ENCODE measurements at regions of chr6 and their contacts with region 1.

Region 1: GRCh38 chr6:24949020-24949569 is 13.3 kb upstream of the RIPOR2 start:
- DNase-seq: peak; percentile 91
- ATAC-seq: peak; percentile 90
- H3K4me3 ChIP-seq: peak overlapping the region in 3 of 5 experiments; percentile 15 to 58 (median 31)
- H3K4me3 Mint-ChIP-seq: peak overlapping the region; percentile 79
- H3K27ac ChIP-seq: peak overlapping the region; percentile 92 to 93
- H3K27ac Mint-ChIP-seq: peak overlapping the region; percentile 98
- H3K4me1 ChIP-seq: peaks cover 79 to 84% of the 10 kb centered on the region in 2 donors
- H3K4me1 Mint-ChIP-seq: peaks cover 73% of the 10 kb centered on the region
- H3K27me3 ChIP-seq: no peaks in the 10 kb centered on the region
- H3K27me3 Mint-ChIP-seq: no peaks in the 10 kb centered on the region
- CTCF ChIP-seq: no peak

Region 2: GRCh38 chr6:24960991-24961475 is 11.9 kb after region 1 on chr6:
- CTCF ChIA-PET with region 1: interaction called, 4 read pairs
- POLR2A ChIA-PET with region 1: interaction called, 4 read pairs
- intact Hi-C with region 1: loop called (anchors 2 kb)
- DNase-seq: no peak
- ATAC-seq: no peak
- H3K4me3 ChIP-seq: peak overlapping the region in 1 of 5 experiments; percentile 13
- H3K4me3 Mint-ChIP-seq: peak overlapping the region; percentile 68
- H3K27ac ChIP-seq: peak overlapping the region in 1 of 2 donors; percentile 45
- H3K27ac Mint-ChIP-seq: peak overlapping the region; percentile 88
- H3K4me1 ChIP-seq: peaks cover 63 to 69% of the 10 kb centered on the region in 2 donors
- H3K4me1 Mint-ChIP-seq: peaks cover 74% of the 10 kb centered on the region
- H3K27me3 ChIP-seq: no peaks in the 10 kb centered on the region
- H3K27me3 Mint-ChIP-seq: no peaks in the 10 kb centered on the region
- CTCF ChIP-seq: no peak

Region 3: DNA sequence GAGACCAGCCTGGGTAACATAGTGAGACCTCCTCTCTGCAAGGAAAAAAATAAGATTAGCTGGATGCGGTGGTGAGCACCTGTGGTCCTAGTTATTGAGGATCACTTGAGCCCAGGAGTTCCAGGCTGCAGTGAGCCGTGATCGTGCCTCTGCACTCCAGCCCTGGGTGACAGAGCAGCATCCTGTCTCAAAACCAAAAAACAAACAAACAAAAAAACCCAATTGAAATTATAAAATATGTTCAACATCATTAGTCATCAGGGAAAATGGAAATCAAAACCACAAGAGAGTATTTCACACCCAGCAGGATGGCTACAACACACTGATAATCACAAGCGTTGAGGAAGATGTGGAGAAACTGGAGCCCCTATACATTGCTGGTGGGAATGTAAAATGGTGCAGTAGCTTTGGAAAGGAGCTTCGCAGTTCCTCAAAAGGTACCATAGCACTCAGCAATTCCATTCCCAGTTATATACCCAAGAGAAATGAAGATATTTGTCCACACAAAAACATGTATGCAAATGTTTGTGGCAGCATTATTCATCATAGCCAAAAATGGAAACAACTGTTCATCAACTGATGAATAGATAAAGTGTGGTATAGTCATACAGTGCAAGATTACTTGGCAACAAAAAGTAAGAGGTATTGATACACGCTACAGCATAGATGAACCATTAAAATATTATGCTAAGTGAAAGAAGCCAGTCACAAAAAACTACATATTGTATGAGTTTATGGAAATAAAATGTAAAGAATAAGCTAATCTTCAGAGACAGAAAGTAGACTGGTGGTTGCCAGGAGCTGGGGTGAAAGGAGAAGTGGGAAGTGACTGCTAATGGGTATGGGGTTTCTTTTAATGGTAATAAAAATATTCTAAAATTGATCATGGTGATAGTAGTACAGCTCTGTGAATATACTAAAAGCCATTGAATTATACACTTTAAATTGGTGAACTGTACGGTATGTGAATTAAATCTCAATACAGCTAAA is 25.4 kb after region 1 on chr6:
- CTCF ChIA-PET with region 1: interaction called, 8 read pairs
- POLR2A ChIA-PET with region 1: interaction called, 4 read pairs
- intact Hi-C with region 1: loop called (anchors 1 kb)
- DNase-seq: peak; percentile 43
- ATAC-seq: peak; percentile 79
- H3K4me3 ChIP-seq: peak overlapping the region in 1 of 5 experiments; percentile 33
- H3K4me3 Mint-ChIP-seq: peak overlapping the region; percentile 76
- H3K27ac ChIP-seq: peak overlapping the region; percentile 42 to 50
- H3K27ac Mint-ChIP-seq: peak overlapping the region; percentile 90
- H3K4me1 ChIP-seq: peaks cover 34 to 42% of the 10 kb centered on the region in 2 donors
- H3K4me1 Mint-ChIP-seq: peaks cover 65% of the 10 kb centered on the region
- H3K27me3 ChIP-seq: no peaks in the 10 kb centered on the region
- H3K27me3 Mint-ChIP-seq: no peaks in the 10 kb centered on the region
- CTCF ChIP-seq: no peak

Measured in B cell (primary cell).